Pancreas (tissue), 10 donors: ENCODE measurements at regions of chr12 and their contacts with region 1.

Region 1: GRCh38 chr12:11581179-11581755 is 68.2 kb upstream of the ETV6 start:
- DNase-seq: peak in 4 of 6 donors; percentile 27 to 60 (median 40)
- ATAC-seq: peak in 3 of 4 donors; percentile 67 to 75 (median 70)
- H3K4me3 ChIP-seq: no peak overlapping the region
- H3K27ac ChIP-seq: no peak overlapping the region
- H3K4me1 ChIP-seq: no peaks in the 10 kb centered on the region
- H3K27me3 ChIP-seq: no peaks in the 10 kb centered on the region
- CTCF ChIP-seq: peak in 3 of 4 donors; percentile 31 to 59 (median 59)

Region 2: GRCh38 chr12:11765817-11766794 is 184.8 kb after region 1 on chr12:
- intact Hi-C with region 1: no loop called
- DNase-seq: peak in 1 of 6 donors; percentile 40
- ATAC-seq: peak in 2 of 4 donors; percentile 36 to 37
- H3K4me3 ChIP-seq: no peak overlapping the region
- H3K27ac ChIP-seq: peak overlapping the region in 2 of 4 donors; percentile 38 to 39
- H3K4me1 ChIP-seq: peaks cover 3 to 53% (median 23%) of the 10 kb centered on the region in 3 donors
- H3K27me3 ChIP-seq: no peaks in the 10 kb centered on the region
- CTCF ChIP-seq: no peak

Region 3: DNA sequence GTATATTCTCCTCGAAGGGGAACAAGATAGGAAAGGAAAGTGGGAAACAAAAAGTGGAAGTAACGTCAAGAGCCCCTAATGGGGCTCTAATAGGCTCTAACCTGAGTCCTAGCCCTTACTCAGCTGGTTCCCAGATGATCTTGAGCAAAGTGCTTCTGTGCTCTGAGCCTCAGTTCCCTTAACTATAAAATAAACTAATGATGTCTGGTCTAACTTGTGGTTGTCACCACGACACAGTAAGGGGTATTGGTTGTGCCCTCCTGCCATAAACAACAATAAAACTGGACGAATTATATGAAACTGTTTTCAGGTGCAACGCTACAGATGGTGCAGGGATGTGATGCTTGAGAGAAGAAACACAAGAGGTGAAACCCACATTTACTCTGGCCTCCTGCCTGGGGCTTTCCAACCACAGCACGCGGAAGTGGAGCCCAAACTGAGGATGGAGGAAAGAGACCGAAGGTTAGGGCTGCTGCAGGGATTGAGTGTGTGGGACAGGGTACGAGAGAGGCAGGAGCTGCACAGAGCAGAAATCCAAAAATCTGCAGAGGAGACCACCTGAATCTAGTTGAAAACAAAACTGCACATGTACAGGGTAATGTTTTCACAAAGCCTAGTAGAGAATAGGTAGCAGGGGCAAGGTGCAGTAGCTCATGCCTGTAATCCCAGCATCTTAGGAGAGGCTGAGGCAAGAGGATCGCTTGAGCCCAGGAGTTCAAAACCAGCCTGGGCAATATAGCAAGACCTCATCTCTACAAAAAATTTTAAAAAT is 443.8 kb after region 1 on chr12:
- intact Hi-C with region 1: loop called in 2 of 3 experiments (anchors 5 kb)
- DNase-seq: no peak
- ATAC-seq: peak in 3 of 4 donors; percentile 42 to 58 (median 44)
- H3K4me3 ChIP-seq: no peak overlapping the region
- H3K27ac ChIP-seq: no peak overlapping the region
- H3K4me1 ChIP-seq: no peaks in the 10 kb centered on the region
- H3K27me3 ChIP-seq: no peaks in the 10 kb centered on the region
- CTCF ChIP-seq: no peak

Region 4: GRCh38 chr12:12032851-12033588 is 451.8 kb after region 1 on chr12:
- intact Hi-C with region 1: loop called in 2 of 3 experiments (anchors 5 kb)
- DNase-seq: peak; percentile 61 to 90 (median 82)
- ATAC-seq: peak; percentile 92 to 95 (median 92)
- H3K4me3 ChIP-seq: peak overlapping the region; percentile 3 to 42 (median 28)
- H3K27ac ChIP-seq: peak overlapping the region in 3 of 4 donors; percentile 11 to 87 (median 74)
- H3K4me1 ChIP-seq: no peaks in the 10 kb centered on the region
- H3K27me3 ChIP-seq: no peaks in the 10 kb centered on the region
- CTCF ChIP-seq: peak; percentile 41 to 87 (median 63)